Left colon (tissue), 2 donors: ENCODE measurements at regions of chr9 and their contacts with region 1.

Region 1: DNA sequence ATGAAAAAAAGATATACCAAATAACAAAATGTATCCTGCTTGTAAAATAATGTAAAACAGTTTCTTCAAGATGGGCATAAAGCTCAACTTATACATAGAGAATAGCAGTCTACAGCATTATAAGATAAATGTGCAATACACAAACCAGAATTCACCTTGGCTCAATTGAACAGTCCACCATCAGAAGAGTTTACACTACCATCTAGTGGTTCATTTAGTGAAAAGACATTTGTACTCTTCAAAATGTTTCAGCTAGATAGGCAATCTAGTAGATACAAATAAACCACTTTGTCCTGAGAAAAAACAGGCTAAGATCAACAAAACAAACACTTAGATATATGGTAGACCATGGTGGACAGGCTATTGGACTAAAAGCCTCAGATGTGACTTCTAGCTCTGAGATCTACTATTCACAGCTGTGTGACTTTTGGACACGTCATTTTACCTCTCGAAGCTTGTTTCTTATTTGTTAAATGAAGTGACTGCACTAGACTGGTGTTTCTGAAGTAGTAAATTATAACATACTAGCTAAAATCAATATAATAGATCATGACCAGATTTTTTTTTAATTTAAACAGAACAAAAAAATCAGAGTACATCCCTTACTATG is 22.1 kb upstream of the TPD52L3 start:
- DNase-seq: no peak
- ATAC-seq: peak; percentile 83

Region 2: DNA sequence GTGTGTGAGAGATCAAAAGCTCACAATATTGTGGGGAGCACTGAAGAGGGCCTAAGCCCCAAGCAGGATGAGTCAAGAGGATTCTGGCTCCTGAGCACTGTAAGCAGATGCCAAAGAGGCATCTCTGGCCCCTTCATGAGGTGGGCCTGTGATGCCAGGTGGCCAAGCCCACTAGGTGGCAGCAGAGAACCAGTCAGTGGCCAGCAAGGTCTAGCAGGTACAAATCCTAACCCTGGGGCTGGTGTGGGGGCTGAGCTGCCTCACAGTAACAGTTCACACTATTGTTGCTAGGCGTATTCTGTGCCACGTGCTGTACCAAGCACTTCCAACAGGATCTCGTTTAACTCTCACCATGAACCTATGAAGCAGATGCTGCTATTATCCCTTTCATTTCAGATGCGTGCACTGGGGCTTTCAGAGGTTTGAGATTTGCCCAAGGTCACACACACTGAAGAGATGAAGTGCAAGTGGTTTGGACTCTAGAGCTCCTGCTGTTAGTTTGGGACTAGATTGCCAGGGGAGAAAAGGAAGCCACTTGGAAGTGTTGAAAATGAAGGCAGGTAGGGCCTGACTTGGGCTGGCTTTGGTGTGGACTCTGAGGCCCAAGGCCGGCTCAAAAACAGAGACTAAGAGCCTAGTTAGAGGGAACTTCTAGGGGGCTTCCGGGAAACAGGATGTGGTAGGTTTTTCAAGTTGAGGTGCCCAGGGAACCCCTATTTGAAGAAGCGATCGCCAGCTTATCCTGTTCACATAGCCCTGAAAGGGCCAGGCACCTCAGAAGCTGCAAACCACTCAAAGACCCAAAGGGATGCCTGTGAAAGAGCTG is 419.7 kb before region 1 on chr9:
- intact Hi-C with region 1: loop called in 1 of 2 experiments (anchors 10 kb)
- DNase-seq: peak; percentile 58 to 85
- ATAC-seq: peak; percentile 89

Region 3: DNA sequence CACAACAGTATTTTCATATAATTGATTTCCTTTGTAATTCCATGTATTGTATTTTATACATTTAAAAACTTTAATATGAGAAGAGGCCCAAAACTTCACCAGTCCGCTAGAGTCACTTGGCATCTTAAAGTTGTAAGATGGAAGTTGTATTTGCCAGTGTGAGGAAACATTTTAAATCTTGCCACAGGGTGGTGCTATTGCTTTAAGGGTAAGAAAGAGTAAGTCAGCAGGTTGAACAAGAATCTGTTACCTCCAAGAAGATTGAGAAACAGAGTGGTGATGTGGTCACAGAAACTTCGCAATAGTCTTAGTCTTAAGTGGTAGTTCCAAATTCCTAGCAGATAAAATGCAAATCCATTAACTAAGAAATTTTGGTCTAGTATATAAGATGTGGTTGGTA is 250.8 kb before region 1 on chr9:
- intact Hi-C with region 1: loop called in 1 of 2 experiments (anchors 5 kb)
- DNase-seq: no peak
- ATAC-seq: peak; percentile 92

Region 4: DNA sequence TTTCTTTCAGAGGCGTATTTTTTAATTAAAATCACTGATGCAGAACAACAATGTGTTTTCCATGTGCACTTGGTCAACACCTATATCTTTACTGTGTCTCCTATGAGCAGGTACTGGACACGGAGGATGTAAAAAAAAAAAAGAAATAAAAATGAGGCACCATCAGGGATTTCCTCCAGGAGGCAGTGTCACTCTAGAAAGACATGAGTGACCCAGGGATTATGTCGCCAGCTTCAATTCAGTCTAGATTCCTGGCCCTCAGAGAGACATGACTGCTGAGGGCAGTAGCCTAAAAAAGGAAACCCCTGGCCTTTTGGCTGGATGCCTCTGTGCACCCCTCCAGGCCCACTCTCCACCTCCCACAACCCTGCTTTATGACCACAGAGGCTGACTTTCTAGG is 108.7 kb before region 1 on chr9:
- intact Hi-C with region 1: loop called in 1 of 2 experiments (anchors 5 kb)
- DNase-seq: no peak
- ATAC-seq: peak; percentile 74